ENCODE measurements at regions of chr12 and their contacts with region 1.

Region 1: DNA sequence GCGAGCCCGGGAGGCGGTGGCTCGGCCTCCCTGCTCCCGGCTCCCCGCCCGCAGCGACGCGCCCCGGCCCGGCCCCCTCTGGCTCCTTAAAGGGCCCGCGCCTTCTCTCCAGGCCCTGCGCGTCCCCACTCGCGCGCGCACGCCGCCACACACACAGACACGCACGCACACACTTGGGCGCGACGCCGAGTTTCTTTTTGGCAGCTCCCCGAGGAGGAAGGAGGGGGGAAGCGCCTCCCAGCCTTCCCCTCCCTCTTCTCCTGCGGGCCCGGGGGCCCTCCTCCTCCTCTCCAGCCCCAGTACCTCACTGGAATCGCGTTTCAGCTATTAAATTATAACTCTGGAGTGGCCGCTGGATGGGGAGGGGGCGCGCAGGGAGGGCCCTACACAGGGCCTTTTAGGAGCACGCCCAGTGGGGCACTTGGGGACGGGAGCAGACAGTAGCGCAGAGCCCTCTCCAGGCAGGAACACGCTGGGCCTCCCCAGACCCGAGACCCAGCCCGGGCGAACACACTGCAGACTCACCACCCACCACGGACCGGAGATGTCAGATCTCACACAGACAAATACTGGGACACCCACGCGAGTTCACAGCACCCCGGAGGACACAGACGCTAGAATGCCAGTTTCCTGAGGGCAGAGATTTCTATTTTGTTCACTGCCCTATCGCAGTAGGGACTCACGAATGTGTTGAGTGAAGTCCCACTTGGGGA is 405 bp upstream of the NCOR2 start:
- DNase-seq: peak; percentile 74
- ATAC-seq: peak; percentile 66
- H3K4me3 Mint-ChIP-seq: peak overlapping the region; percentile 82
- H3K27ac Mint-ChIP-seq: peak overlapping the region; percentile 84
- H3K4me1 Mint-ChIP-seq: peaks cover 44% of the 10 kb centered on the region
- H3K27me3 Mint-ChIP-seq: no peaks in the 10 kb centered on the region
- CTCF ChIP-seq: no peak

Region 2: GRCh38 chr12:124391340-124392261 is 176.2 kb before region 1 on chr12:
- CTCF ChIA-PET with region 1: no interaction called
- POLR2A ChIA-PET with region 1: no interaction called
- intact Hi-C with region 1: loop called (anchors 1 kb)
- DNase-seq: peak; percentile 73
- ATAC-seq: peak; percentile 77
- H3K4me3 Mint-ChIP-seq: peak overlapping the region; percentile 83
- H3K27ac Mint-ChIP-seq: peak overlapping the region; percentile 79
- H3K4me1 Mint-ChIP-seq: peaks cover 47% of the 10 kb centered on the region
- H3K27me3 Mint-ChIP-seq: no peaks in the 10 kb centered on the region
- CTCF ChIP-seq: no peak

Region 3: DNA sequence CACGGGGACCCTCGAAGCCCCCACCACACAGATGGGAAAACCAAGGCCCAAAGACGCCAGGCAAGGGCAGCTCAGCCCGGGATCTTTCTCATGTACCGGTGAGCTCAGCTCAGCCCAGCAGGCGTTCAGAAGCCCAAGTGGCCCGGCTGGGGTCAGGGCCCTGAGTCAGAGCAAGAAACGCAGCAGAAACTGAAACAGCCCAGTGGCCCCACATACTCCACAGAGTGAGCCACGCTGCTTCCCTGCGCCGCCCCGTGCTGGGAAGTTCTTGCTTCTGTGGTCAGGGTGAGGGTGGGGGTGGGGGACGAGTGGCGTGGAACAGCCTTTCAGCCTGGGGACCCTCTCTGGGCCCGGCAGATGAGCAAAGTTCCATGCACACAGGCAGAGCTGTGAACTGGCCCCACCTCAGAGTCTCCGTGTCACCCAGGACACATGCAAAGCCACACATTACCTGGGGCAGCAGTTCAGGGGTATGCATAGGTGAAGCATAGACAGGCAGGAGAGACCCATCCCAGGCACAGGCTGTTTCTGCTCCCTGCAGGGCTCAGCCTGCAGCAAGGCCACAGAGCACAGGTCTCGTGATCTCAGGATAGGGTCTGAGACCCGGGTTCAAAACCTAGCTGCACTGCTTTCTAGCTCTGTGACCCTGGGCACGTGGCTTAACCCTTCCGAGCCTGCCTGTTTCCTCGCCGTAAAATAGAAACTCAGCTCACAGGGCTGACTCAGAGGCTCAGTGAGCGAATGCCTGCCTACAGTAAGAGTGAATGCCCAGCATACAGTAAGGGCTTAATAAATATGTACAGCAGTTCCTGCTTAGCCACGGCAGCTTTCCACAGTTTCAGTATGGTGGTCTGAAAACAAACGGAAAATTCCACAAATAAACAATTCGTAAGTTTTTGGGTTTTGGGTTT is 22.1 kb before region 1 on chr12:
- CTCF ChIA-PET with region 1: no interaction called
- POLR2A ChIA-PET with region 1: interaction called, 8 read pairs
- intact Hi-C with region 1: loop called (anchors 1 kb)
- DNase-seq: peak; percentile 49
- ATAC-seq: peak; percentile 75
- H3K4me3 Mint-ChIP-seq: peak overlapping the region; percentile 65
- H3K27ac Mint-ChIP-seq: peak overlapping the region; percentile 69
- H3K4me1 Mint-ChIP-seq: peaks cover 70% of the 10 kb centered on the region
- H3K27me3 Mint-ChIP-seq: no peaks in the 10 kb centered on the region
- CTCF ChIP-seq: no peak

Region 4: GRCh38 chr12:124609041-124609995 is 41.5 kb after region 1 on chr12:
- CTCF ChIA-PET with region 1: interaction called, 3 read pairs
- POLR2A ChIA-PET with region 1: no interaction called
- intact Hi-C with region 1: loop called (anchors 5 kb)
- DNase-seq: peak; percentile 45
- ATAC-seq: peak; percentile 67
- H3K4me3 Mint-ChIP-seq: peak overlapping the region; percentile 61
- H3K27ac Mint-ChIP-seq: peak overlapping the region; percentile 53
- H3K4me1 Mint-ChIP-seq: peaks cover 23% of the 10 kb centered on the region
- H3K27me3 Mint-ChIP-seq: peaks cover 7% of the 10 kb centered on the region
- CTCF ChIP-seq: no peak

Region 5: GRCh38 chr12:124680863-124681778 is 113.3 kb after region 1 on chr12:
- CTCF ChIA-PET with region 1: no interaction called
- POLR2A ChIA-PET with region 1: no interaction called
- intact Hi-C with region 1: no loop called
- DNase-seq: peak; percentile 26
- ATAC-seq: peak; percentile 96
- H3K4me3 Mint-ChIP-seq: no peak overlapping the region
- H3K27ac Mint-ChIP-seq: no peak overlapping the region
- H3K4me1 Mint-ChIP-seq: peaks cover 14% of the 10 kb centered on the region
- H3K27me3 Mint-ChIP-seq: peaks cover 6% of the 10 kb centered on the region
- CTCF ChIP-seq: no peak

Region 6: DNA sequence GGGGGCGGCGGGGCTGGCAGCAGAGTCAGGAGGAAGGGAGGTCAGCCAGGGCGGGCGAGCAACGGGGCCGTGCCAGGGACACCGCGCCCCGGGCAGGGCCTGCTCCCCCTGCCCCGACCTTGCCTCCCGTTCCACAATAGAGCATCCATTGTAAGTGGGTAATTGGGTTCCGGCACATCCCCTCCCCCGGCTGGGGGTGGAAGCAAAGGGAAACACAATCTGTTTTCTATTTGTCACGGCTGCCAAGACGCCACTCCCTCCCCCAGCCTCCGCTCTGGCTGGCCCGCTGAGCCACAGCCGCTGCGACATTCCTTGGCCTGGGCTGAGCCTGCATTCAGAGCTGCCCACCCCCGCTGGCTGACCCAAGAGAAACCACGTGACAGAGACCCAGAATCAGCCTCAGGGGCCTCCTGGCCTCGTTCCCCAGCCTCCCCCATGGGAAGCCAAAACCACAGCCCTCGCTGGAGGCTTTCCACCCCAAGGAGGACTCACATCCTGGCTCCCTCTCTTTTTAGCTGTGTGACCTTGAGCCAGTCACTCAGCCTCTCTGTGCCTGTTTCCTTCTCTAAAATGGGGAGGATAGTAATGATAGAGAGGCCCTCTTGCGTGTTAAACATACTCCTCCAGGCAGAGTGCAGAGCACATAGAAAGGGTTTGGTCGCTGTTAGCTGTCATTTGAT is 178.2 kb after region 1 on chr12:
- CTCF ChIA-PET with region 1: no interaction called
- POLR2A ChIA-PET with region 1: no interaction called
- intact Hi-C with region 1: no loop called
- DNase-seq: no peak
- ATAC-seq: peak; percentile 43
- H3K4me3 Mint-ChIP-seq: no peak overlapping the region
- H3K27ac Mint-ChIP-seq: no peak overlapping the region
- H3K4me1 Mint-ChIP-seq: peaks cover 20% of the 10 kb centered on the region
- H3K27me3 Mint-ChIP-seq: peaks cover 24% of the 10 kb centered on the region
- CTCF ChIP-seq: no peak

Region 7: DNA sequence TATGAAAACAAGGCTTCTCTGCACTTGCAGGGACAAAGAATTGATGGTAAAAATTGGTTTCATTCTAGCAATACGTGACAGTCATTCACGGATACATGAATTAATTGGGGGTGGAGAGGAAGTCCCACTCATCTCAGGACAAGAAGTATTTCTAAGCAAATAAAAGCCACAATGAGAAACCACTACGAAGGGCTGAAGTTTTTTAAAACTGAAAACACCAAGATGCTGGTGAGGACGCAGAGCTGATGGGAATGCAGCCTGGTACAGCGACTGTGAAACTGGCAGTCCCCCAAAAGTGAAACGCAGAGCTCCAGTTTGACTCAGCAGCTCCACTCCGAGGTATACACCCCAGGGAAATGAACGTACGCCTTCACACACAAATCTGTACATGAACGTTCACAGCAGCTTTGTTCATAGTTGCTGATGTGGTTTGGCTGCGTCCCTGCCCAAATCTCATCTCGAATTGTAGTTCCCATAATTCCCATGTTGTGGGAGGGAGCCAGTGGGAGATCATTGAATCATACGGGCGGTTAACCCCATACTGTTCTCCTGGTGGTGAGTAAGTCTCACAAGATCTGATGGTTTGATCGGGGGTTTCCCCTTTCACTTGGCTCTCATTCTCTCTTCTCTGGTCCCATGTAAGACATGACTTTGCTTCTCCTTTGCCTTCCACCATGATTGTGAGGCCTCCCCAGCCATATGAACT is 206.8 kb after region 1 on chr12:
- CTCF ChIA-PET with region 1: no interaction called
- POLR2A ChIA-PET with region 1: interaction called, 3 read pairs
- intact Hi-C with region 1: loop called (anchors 1 kb)
- DNase-seq: peak; percentile 48
- ATAC-seq: peak; percentile 87
- H3K4me3 Mint-ChIP-seq: peak overlapping the region; percentile 74
- H3K27ac Mint-ChIP-seq: peak overlapping the region; percentile 97
- H3K4me1 Mint-ChIP-seq: peaks cover 47% of the 10 kb centered on the region
- H3K27me3 Mint-ChIP-seq: peaks cover 7% of the 10 kb centered on the region
- CTCF ChIP-seq: no peak

Measured in activated B cell treated with CpG ODN at 0.5 μM for 24 hours (primary cell).